ENCODE measurements at regions of chr1 and their contacts with region 1.

Region 1: DNA sequence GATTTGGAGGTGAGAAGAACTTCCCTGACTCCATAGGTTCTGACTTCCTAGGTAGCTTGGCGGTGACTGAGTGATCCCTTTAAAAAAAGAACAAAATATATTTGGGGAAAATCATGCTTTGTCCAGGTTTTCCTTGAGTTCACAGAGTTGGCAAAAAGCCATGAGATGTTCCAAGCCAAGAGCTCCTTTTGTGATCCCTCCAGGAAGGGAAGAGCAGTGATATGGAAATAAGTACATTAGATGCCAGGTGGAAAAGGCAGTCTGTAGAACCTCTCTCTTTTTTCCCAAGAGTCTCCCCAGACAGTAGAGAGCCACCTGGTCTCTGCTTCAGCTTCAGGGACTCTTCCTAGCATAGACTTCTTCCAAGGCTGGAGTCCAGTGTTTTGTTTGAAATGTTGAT is 10.2 kb downstream of the TLCD4 start:
- DNase-seq: no peak
- H3K4me3 ChIP-seq: no peak overlapping the region
- CTCF ChIP-seq: no peak

Region 2: DNA sequence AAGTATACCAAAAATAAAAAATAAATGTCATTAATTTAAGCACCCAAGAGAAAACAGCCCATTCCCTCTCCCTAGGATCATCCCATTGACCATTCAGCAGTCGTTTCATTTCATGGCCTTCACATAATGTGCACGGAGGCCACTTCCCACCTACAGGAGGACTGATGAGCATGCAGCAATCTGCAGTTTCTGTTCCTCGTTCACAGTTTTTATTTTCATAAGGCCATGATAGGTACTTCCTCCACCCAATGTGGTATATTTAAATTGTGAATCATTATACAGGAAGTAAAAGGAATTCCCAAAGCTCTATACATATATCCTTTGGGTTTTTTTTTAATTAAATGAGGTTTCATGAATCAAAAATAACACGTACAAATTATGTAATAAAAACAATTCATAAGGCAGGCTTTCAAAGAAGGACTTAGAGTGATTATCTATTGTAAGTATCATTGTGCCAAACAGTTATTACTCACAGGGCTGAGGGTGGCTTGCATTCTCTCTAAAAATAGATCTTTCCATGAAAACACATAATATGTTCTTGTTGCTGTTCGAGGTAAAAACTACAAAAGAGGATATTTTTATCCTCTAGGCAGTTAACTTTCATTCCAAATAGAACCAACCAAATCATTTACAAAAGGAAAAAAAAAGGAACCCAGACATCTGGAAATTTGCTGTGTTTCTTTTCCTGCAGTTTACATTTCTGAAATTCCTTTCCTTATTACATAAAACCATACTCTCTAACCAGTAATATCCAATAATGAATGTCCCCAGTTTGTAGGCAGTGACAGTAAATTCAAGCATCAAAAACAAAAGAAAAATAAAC is 334.7 kb before region 1 on chr1:
- in situ Hi-C with region 1: no loop called
- DNase-seq: peak; percentile 64
- H3K4me3 ChIP-seq: no peak overlapping the region
- CTCF ChIP-seq: peak; percentile 49

Region 3: DNA sequence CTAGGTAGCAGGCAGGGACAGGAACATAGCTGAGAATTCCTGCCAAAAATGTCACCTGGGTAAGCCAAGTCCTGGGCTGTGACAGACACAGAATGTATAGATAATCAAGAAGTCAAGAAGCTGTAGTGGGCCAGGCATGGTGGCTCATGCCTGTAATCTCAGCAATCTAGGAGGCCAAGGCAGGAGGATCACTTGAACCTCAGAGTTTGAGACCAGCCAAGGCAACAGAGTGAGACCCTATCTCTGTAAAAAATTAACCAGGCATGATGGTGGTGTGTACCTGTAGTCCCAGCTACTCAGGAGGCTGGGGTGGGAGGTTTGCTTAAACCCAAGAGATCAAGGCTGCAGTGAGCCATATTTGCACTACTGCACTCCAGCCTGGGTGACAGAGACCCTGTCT is 51.3 kb before region 1 on chr1:
- in situ Hi-C with region 1: loop called (anchors 5 kb)
- DNase-seq: no peak
- H3K4me3 ChIP-seq: no peak overlapping the region
- CTCF ChIP-seq: no peak

Region 4: GRCh38 chr1:95197616-95198252 is 70.4 kb after region 1 on chr1:
- in situ Hi-C with region 1: loop called (anchors 5 kb)
- DNase-seq: peak; percentile 97
- H3K4me3 ChIP-seq: no peak overlapping the region
- CTCF ChIP-seq: no peak

Region 5: GRCh38 chr1:95223110-95223509 is 95.7 kb after region 1 on chr1:
- in situ Hi-C with region 1: no loop called
- DNase-seq: no peak
- H3K4me3 ChIP-seq: no peak overlapping the region
- CTCF ChIP-seq: no peak